GM10248 (cell line): ENCODE measurements at regions of chr18 and their contacts with region 1.

Region 1: GRCh38 chr18:58970943-58971790 is 106.5 kb downstream of the ZNF532 start:
- DNase-seq: peak; percentile 39
- CTCF ChIP-seq: no peak

Region 2: DNA sequence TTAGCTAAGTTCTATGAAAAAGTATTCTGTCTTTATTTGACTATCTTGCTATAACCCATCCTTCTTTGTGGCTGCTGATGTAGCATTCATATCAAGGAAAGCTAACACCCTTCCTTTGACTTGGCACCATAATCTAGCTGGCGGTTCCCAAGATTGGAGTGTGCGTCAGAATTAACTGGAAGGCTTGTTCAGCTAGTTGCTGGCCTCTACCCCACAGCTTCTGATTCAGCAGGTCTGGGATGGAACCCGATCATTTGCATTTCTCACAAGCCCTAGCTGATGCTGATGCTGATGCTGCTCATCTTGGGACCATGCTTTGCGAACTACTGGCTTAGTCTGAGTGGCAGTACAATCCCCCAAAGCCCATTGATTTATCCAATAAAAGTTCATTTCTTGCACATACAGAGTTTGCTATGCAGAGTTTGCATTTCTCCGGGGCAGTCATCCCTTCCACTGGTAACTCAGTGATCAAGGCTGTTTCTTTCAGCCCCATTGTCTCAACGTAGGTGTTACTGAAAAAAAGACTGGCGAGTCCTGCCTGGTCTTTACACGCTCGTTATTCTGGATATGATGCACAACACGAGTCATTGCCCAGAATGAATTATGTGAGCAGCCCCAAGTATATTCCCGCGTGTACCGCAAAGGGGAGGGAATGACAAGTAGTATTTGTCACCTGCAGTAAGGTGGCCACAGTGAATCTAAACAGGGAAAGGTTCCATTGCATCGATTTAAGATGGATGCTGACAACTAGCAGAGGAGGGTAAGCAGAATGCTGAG is 10.0 kb before region 1 on chr18:
- CTCF ChIA-PET with region 1: interaction called, 10 read pairs
- POLR2A ChIA-PET with region 1: no interaction called
- DNase-seq: no peak
- CTCF ChIP-seq: no peak